ENCODE measurements at regions of chr17 and their contacts with region 1.

Region 1: GRCh38 chr17:57849874-57850754 is at the start of gene MRPS23:
- DNase-seq: peak; percentile 98 to 99
- H3K4me3 ChIP-seq: peak within 1 kb of the TSS; percentile 84
- H3K4me3 Mint-ChIP-seq: peak within 1 kb of the TSS; percentile 92
- H3K27ac Mint-ChIP-seq: peak within 1 kb of the TSS; percentile 94
- H3K4me1 ChIP-seq: peaks cover 20% of the 10 kb centered on the region
- H3K4me1 Mint-ChIP-seq: peaks cover 31% of the 10 kb centered on the region
- H3K27me3 ChIP-seq: no peaks in the 10 kb centered on the region
- H3K27me3 Mint-ChIP-seq: no peaks in the 10 kb centered on the region
- CTCF ChIP-seq: no peak
- total RNA-seq, gene MRPS23: 72.9 and 75.1 TPM in 2 replicates

Region 2: GRCh38 chr17:57875309-57876115 is 25.4 kb after region 1 on chr17:
- CTCF ChIA-PET with region 1: interaction called, 7 read pairs
- POLR2A ChIA-PET with region 1: no interaction called
- intact Hi-C with region 1: loop called (anchors 1 kb)
- DNase-seq: peak; percentile 72 to 76
- H3K4me3 ChIP-seq: no peak overlapping the region
- H3K4me3 Mint-ChIP-seq: no peak overlapping the region
- H3K27ac Mint-ChIP-seq: peak overlapping the region; percentile 89
- H3K4me1 ChIP-seq: peaks cover 34% of the 10 kb centered on the region
- H3K4me1 Mint-ChIP-seq: peaks cover 36% of the 10 kb centered on the region
- H3K27me3 ChIP-seq: no peaks in the 10 kb centered on the region
- H3K27me3 Mint-ChIP-seq: no peaks in the 10 kb centered on the region
- CTCF ChIP-seq: peak; percentile 33 to 36